Activated CD4-positive, alpha-beta memory T cell treated with anti-CD3 and anti-CD28 coated beads, Interleukin-2, amount 10 ng/mL, durations not matched to agents 7 days and 5 days (primary cell): ENCODE measurements at regions of chr10 and their contacts with region 1.

Region 1: GRCh38 chr10:71696628-71697326 is 22.8 kb downstream of the C10orf105 start:
- DNase-seq: peak; percentile 71
- H3K4me3 Mint-ChIP-seq: no peak overlapping the region
- H3K27ac Mint-ChIP-seq: no peak overlapping the region
- H3K4me1 Mint-ChIP-seq: peaks cover 65% of the 10 kb centered on the region
- H3K27me3 Mint-ChIP-seq: no peaks in the 10 kb centered on the region

Region 2: GRCh38 chr10:71740069-71740468 is 43.3 kb after region 1 on chr10:
- CTCF ChIA-PET with region 1: interaction called, 28 read pairs
- POLR2A ChIA-PET with region 1: interaction called, 3 read pairs
- DNase-seq: no peak
- H3K4me3 Mint-ChIP-seq: no peak overlapping the region
- H3K27ac Mint-ChIP-seq: no peak overlapping the region
- H3K4me1 Mint-ChIP-seq: peaks cover 90% of the 10 kb centered on the region
- H3K27me3 Mint-ChIP-seq: no peaks in the 10 kb centered on the region

Region 3: DNA sequence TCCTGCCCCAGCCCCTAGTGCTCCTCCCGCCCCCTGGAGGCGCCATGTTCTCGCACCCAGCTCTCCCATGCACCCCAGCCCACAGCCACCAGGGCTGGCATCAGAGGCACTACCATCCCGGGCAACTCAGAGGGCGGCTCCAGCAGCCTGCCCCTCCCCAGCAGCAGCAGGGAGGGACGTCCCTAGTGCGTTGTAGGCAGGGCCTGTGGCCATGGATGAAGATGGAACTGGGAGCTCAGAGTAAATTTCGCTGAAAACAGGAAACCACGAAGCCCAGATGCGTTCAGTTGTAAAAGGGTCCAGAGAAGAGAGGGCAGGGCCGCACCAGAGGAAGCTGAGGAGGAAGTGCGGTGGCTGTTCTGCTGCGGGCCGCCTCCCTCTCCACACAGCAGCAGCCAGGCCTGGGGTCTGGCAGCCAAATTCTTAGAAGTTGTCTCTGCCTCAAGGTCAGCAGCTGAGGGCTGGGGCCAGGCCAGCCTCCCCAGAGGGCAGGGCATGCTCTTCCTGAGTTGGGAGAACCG is 52.0 kb after region 1 on chr10:
- CTCF ChIA-PET with region 1: interaction called, 22 read pairs
- POLR2A ChIA-PET with region 1: interaction called, 18 read pairs
- DNase-seq: peak; percentile 93
- H3K4me3 Mint-ChIP-seq: peak overlapping the region; percentile 43
- H3K27ac Mint-ChIP-seq: peak overlapping the region; percentile 95
- H3K4me1 Mint-ChIP-seq: peaks cover 97% of the 10 kb centered on the region
- H3K27me3 Mint-ChIP-seq: no peaks in the 10 kb centered on the region

Region 4: GRCh38 chr10:71756311-71757191 is 59.8 kb after region 1 on chr10:
- CTCF ChIA-PET with region 1: interaction called, 6 read pairs
- POLR2A ChIA-PET with region 1: interaction called, 12 read pairs
- DNase-seq: no peak
- H3K4me3 Mint-ChIP-seq: peak overlapping the region; percentile 21
- H3K27ac Mint-ChIP-seq: peak overlapping the region; percentile 87
- H3K4me1 Mint-ChIP-seq: peaks cover 78% of the 10 kb centered on the region
- H3K27me3 Mint-ChIP-seq: no peaks in the 10 kb centered on the region

Region 5: DNA sequence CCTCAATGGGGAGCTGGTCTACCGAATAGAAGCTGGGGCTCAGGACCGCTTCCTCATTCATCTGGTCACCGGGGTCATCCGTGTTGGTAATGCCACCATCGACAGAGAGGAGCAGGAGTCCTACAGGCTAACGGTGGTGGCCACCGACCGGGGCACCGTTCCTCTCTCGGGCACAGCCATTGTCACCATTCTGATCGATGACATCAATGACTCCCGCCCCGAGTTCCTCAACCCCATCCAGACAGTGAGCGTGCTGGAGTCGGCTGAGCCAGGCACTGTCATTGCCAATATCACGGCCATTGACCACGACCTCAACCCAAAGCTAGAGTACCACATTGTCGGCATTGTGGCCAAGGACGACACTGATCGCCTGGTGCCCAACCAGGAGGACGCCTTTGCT is 96.4 kb after region 1 on chr10:
- CTCF ChIA-PET with region 1: no interaction called
- POLR2A ChIA-PET with region 1: no interaction called
- DNase-seq: no peak
- H3K4me3 Mint-ChIP-seq: no peak overlapping the region
- H3K27ac Mint-ChIP-seq: no peak overlapping the region
- H3K4me1 Mint-ChIP-seq: peaks cover 12% of the 10 kb centered on the region
- H3K27me3 Mint-ChIP-seq: no peaks in the 10 kb centered on the region

Region 6: DNA sequence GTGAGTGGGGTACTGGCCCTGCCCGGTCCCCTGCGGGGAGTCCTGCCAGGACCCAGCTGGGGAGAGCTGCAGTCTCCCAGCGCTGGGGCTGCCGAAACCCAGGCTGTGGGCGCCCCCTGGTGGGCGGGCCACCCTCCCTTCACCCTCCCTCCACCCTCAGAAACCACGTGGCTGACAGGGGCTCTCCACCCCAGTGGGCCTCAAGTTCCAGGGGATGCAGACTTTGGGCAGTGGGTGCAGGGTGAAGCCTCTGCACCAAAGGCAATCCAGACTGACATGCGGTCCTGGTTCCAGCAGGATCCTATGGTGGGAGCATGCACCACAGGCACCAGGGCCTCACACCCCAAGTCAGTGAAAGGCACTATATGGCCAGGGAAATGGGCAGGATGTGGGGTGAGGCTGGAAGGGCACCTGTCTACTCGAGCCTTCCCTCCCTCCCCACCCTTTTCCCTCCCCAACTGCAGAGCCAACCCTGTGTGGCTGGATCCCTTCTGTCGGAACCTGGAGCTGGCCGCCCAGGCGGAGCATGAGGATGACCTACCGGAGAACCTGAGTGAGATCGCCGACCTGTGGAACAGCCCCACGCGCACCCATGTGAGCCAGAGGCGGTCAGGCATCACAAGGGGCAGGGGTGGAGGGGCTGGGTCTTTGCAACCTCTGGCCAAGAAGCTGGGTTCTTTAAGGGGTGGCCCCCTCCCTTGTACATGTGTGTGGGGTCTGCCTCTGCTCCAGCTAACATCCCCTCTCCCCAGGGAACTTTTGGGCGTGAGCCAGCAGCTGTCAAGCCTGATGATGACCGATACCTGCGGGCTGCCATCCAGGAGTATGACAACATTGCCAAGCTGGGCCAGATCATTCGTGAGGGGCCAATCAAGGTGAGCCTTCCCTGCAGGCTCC is 115.5 kb after region 1 on chr10:
- CTCF ChIA-PET with region 1: interaction called, 12 read pairs
- POLR2A ChIA-PET with region 1: no interaction called
- DNase-seq: peak; percentile 81
- H3K4me3 Mint-ChIP-seq: no peak overlapping the region
- H3K27ac Mint-ChIP-seq: no peak overlapping the region
- H3K4me1 Mint-ChIP-seq: no peaks in the 10 kb centered on the region
- H3K27me3 Mint-ChIP-seq: peaks cover 1% of the 10 kb centered on the region

Region 7: GRCh38 chr10:71963756-71964668 is 267.2 kb after region 1 on chr10 and contains the start of gene CHST3:
- CTCF ChIA-PET with region 1: no interaction called
- POLR2A ChIA-PET with region 1: no interaction called
- DNase-seq: no peak
- H3K4me3 Mint-ChIP-seq: peak within 1 kb of the TSS; percentile 48
- H3K27ac Mint-ChIP-seq: no peak within 1 kb of the TSS
- H3K4me1 Mint-ChIP-seq: peaks cover 7% of the 10 kb centered on the region
- H3K27me3 Mint-ChIP-seq: peaks cover 68% of the 10 kb centered on the region
- total RNA-seq, gene CHST3: 0.03 to 0.05 TPM